Aorta (tissue), 5 donors: ENCODE measurements at regions of chr1 and their contacts with region 1.

Region 1: DNA sequence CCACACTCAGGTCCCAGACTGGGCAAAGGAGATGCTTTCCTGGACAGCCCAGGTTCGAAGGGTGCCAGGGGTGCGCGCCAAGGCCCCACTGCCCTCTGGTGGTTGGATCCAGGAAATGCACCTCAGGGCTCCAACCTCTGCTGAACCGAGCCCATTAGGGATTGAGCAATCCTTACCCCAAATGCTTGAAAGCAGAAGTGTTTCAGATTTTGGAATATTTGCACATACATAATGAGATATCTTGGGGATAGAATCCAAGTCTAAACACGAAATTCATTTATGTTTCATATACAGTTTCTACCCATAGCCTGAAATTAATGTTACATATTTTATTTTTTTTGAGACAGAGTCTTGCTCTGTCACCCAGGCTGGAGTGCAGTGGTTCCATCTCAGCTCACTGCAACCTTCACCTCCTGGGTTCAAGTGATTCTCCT is 57.4 kb downstream of the SLC9A1 start:
- DNase-seq: peak; percentile 85 to 91
- ATAC-seq: peak; percentile 88
- H3K4me3 ChIP-seq: no peak overlapping the region
- H3K27ac ChIP-seq: no peak overlapping the region
- H3K4me1 ChIP-seq: no peaks in the 10 kb centered on the region
- H3K27me3 ChIP-seq: no peaks in the 10 kb centered on the region

Region 2: DNA sequence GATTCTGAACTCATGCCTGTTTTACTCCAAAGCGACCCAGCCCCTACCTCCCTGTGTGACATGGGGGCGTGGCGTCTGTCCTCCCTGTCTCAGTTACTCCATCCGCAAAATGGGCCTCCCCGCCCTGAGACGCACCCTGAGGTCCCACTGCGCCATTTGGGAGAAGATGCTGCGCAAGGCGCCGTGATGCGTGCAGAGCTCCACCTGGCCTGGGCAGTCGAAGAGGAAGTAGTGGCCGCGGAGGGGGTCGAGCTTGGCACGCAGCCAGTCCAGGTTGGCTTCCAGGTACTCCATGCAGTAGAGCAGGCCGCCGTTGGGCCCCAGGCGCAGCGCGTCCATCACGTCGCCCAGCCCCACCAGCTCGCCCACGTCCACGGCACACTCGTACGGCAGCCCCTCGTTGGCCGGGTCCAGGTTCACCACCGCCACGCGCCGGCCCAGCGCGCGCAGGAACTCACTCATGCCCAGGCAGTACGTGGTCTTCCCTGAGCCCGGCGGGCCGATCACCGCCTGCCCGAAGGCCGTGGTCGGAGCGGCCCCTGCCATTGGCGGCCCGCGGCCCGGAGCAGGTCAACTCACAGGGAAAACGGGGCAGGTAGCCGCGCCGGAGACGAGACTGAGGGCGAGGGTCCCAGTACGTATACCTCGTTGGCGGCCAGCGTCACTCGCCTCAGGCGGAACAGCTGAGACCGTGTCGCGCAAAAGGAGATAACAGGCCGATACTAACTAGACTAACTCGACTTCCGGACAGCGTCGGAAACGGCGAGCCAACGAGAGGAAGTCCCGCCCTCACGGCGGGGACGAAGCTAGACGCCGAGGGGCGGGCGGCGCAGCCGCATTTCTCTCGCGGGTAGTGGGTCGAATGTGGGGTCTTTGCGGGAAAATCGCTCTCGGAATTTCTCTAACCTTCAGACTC is 207.7 kb before region 1 on chr1 and contains the start of gene GPN2:
- intact Hi-C with region 1: no loop called
- DNase-seq: peak; percentile 88 to 93
- ATAC-seq: peak; percentile 93
- H3K4me3 ChIP-seq: peak within 1 kb of the TSS; percentile 50 to 51
- H3K27ac ChIP-seq: peak within 1 kb of the TSS; percentile 46 to 92
- H3K4me1 ChIP-seq: peaks cover 0 to 2% of the 10 kb centered on the region in 2 donors
- H3K27me3 ChIP-seq: no peaks in the 10 kb centered on the region
- total RNA-seq, gene GPN2: 17.7 to 19.6 TPM

Region 3: DNA sequence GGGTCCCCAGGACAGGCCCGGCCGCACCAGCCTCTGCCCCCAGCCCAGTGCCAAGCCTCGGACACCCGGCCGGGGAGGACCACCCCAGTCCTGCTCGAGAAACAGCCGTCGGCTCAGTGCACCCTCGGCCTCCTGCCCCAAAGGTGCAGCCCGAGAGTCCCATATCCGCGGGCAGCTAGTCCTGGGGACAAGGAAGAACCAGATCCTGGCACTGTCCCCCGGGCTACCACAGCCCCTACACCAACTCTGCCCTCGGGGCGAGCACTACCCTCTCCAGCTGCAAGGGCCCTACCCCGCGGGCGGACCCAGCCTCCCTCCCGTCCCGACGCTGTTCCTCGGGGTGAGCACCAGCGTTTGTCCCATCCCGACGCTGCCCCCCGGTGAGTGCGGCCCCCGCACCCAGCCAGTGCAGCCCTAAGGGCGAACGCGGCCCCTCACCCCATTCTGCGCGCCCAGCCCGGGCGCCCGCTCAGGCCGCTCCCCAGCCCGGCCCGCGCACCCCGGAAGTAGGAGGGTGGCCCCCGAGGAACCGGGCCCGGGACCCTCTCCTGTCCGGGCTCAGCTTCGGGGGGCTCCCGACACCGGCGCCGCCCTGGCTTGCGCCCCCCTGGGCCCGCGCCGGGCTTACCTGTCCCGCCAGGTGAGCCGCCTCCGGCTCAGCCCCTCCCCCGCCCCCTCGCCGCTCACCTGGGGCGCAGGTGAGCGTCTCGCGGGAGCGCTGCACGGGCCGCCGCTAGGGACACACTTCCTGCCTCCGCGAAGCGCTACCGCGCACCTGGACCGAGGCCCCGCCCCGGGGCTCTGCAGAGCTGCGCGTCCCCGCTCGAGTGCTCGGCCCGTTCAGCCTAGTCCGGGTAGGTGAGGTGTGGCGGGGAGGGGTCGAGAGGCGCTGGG is 137.5 kb before region 1 on chr1 and contains the start of gene KDF1:
- intact Hi-C with region 1: loop called in 1 of 2 experiments (anchors 10 kb)
- DNase-seq: no peak
- ATAC-seq: peak; percentile 36
- H3K4me3 ChIP-seq: no peak within 1 kb of the TSS
- H3K27ac ChIP-seq: no peak within 1 kb of the TSS
- H3K4me1 ChIP-seq: no peaks in the 10 kb centered on the region
- H3K27me3 ChIP-seq: no peaks in the 10 kb centered on the region
- total RNA-seq, gene KDF1: not detected

Region 4: GRCh38 chr1:26965640-26966039 is 131.9 kb before region 1 on chr1:
- intact Hi-C with region 1: loop called (anchors 2 to 10 kb)
- DNase-seq: no peak
- ATAC-seq: no peak
- H3K4me3 ChIP-seq: no peak overlapping the region
- H3K27ac ChIP-seq: no peak overlapping the region
- H3K4me1 ChIP-seq: no peaks in the 10 kb centered on the region
- H3K27me3 ChIP-seq: no peaks in the 10 kb centered on the region

Region 5: GRCh38 chr1:26999440-26999987 is 98.0 kb before region 1 on chr1:
- intact Hi-C with region 1: loop called (anchors 1 to 5 kb)
- DNase-seq: peak; percentile 85 to 91
- ATAC-seq: peak; percentile 81
- H3K4me3 ChIP-seq: no peak overlapping the region
- H3K27ac ChIP-seq: peak overlapping the region; percentile 74 to 95
- H3K4me1 ChIP-seq: no peaks in the 10 kb centered on the region
- H3K27me3 ChIP-seq: no peaks in the 10 kb centered on the region

Region 6: DNA sequence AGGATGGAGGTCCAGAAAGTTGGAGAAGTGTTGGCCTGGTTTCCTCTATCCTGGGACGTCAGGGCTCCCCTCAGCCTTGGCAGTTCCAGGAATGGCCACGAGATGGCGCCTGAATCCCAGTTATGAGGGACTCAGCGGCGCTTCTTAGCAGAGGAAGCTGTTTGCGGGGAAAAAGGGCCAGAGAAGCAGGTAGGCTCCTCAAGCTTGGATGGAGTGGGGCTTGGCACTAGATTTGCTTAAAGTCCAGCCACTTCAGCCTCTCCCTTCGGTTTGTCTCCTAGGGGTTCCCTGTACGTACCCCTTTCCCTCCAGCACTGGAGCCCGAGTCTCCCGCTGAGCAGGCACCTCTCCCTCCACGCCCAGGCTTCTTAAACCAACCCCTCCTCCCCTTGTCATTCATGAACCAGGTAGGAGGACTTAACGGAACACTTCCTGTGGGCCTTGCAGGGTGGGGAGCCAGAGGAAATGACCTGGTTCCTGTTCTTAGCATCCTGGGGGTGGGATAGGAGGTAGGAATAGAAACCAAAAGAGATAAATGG is 52.8 kb before region 1 on chr1:
- intact Hi-C with region 1: loop called (anchors 1 to 2 kb)
- DNase-seq: peak; percentile 88 to 97
- ATAC-seq: peak; percentile 94
- H3K4me3 ChIP-seq: no peak overlapping the region
- H3K27ac ChIP-seq: no peak overlapping the region
- H3K4me1 ChIP-seq: no peaks in the 10 kb centered on the region
- H3K27me3 ChIP-seq: no peaks in the 10 kb centered on the region

Region 7: GRCh38 chr1:27145934-27146354 is 48.4 kb after region 1 on chr1:
- intact Hi-C with region 1: no loop called
- DNase-seq: peak; percentile 63 to 80
- ATAC-seq: peak; percentile 76
- H3K4me3 ChIP-seq: no peak overlapping the region
- H3K27ac ChIP-seq: peak overlapping the region; percentile 48 to 96
- H3K4me1 ChIP-seq: no peaks in the 10 kb centered on the region
- H3K27me3 ChIP-seq: no peaks in the 10 kb centered on the region